KBM-7 (cell line): ENCODE measurements at regions of chr3 and their contacts with region 1.

Region 1: GRCh38 chr3:113287803-113288648 is 76.7 kb downstream of the BOC start:
- DNase-seq: peak; percentile 84

Region 2: GRCh38 chr3:113051302-113051711 is 236.7 kb before region 1 on chr3:
- in situ Hi-C with region 1: loop called (anchors 10 kb)
- DNase-seq: peak; percentile 85